ENCODE measurements at regions of chr12 and their contacts with region 1.

Region 1: GRCh38 chr12:34126239-34126641 is 103.9 kb downstream of the ALG10 start:
- DNase-seq: no peak
- H3K4me3 Mint-ChIP-seq: peak overlapping the region; percentile 3
- H3K27ac Mint-ChIP-seq: no peak overlapping the region
- H3K4me1 Mint-ChIP-seq: peaks cover 9% of the 10 kb centered on the region
- H3K27me3 Mint-ChIP-seq: peaks cover 30% of the 10 kb centered on the region

Region 2: GRCh38 chr12:33708935-33709334 is 417.3 kb before region 1 on chr12:
- CTCF ChIA-PET with region 1: no interaction called
- intact Hi-C with region 1: no loop called
- DNase-seq: no peak
- H3K4me3 Mint-ChIP-seq: no peak overlapping the region
- H3K27ac Mint-ChIP-seq: no peak overlapping the region
- H3K4me1 Mint-ChIP-seq: no peaks in the 10 kb centered on the region
- H3K27me3 Mint-ChIP-seq: no peaks in the 10 kb centered on the region

Region 3: GRCh38 chr12:34402228-34402898 is 276.1 kb after region 1 on chr12:
- CTCF ChIA-PET with region 1: no interaction called
- intact Hi-C with region 1: loop called (anchors 5 kb)
- DNase-seq: peak; percentile 2
- H3K4me3 Mint-ChIP-seq: no peak overlapping the region
- H3K27ac Mint-ChIP-seq: no peak overlapping the region
- H3K4me1 Mint-ChIP-seq: no peaks in the 10 kb centered on the region
- H3K27me3 Mint-ChIP-seq: no peaks in the 10 kb centered on the region

Region 4: DNA sequence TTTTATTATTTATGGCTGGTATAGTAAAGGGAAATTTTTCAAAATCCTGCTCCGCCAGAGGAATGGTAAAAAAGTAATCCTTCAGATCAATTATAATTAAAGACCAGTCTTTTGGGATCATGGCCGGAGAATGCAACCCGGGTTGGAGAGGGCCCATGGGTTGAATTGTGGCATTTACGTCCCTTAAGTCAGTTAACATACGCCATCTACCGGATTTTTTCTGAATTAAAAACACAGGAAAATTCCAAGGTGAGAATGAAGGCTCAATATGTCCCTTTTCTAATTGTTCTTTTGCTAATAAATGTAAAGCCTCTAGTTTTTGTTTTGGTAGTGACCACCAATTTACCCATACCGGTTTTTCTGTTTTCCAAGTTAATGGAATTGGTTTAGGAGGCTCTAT is 498.9 kb after region 1 on chr12:
- CTCF ChIA-PET with region 1: no interaction called
- intact Hi-C with region 1: loop called (anchors 1 kb)
- DNase-seq: no peak
- H3K4me3 Mint-ChIP-seq: no peak overlapping the region
- H3K27ac Mint-ChIP-seq: no peak overlapping the region
- H3K4me1 Mint-ChIP-seq: no peaks in the 10 kb centered on the region
- H3K27me3 Mint-ChIP-seq: no peaks in the 10 kb centered on the region